ENCODE measurements at regions of chr17 and their contacts with region 1.

Region 1: GRCh38 chr17:58112970-58113631 is 29.9 kb downstream of the DYNLL2 start:
- DNase-seq: peak; percentile 88
- H3K4me3 ChIP-seq: no peak overlapping the region
- H3K27ac ChIP-seq: no peak overlapping the region
- H3K4me1 ChIP-seq: no peaks in the 10 kb centered on the region
- H3K27me3 ChIP-seq: no peaks in the 10 kb centered on the region
- CTCF ChIP-seq: peak; percentile 95

Region 2: GRCh38 chr17:57999496-58000017 is 113.5 kb before region 1 on chr17:
- intact Hi-C with region 1: loop called (anchors 5 kb)
- DNase-seq: no peak
- H3K4me3 ChIP-seq: no peak overlapping the region
- H3K27ac ChIP-seq: no peak overlapping the region
- H3K4me1 ChIP-seq: no peaks in the 10 kb centered on the region
- H3K27me3 ChIP-seq: no peaks in the 10 kb centered on the region
- CTCF ChIP-seq: peak; percentile 89

Measured in colonic mucosa (tissue), 4 donors.